ENCODE measurements at regions of chr9 and their contacts with region 1.

Region 1: GRCh38 chr9:71669256-71669975 is 98.9 kb downstream of the CEMIP2 start:
- DNase-seq: no peak
- ATAC-seq: peak; percentile 91
- H3K4me3 ChIP-seq: no peak overlapping the region
- H3K27ac ChIP-seq: no peak overlapping the region
- H3K4me1 ChIP-seq: peaks cover 38% of the 10 kb centered on the region
- H3K27me3 ChIP-seq: no peaks in the 10 kb centered on the region; a peak in 1 of 5 replicates
- CTCF ChIP-seq: no peak
- EP300 ChIP-seq: no peak
- POLR2A ChIP-seq: no peak
- RAD21 ChIP-seq: no peak

Region 2: GRCh38 chr9:72349240-72349639 is 679.8 kb after region 1 on chr9:
- CTCF ChIA-PET with region 1: no interaction called
- POLR2A ChIA-PET with region 1: no interaction called
- in situ Hi-C with region 1: no loop called
- intact Hi-C with region 1: loop called (anchors 5 kb)
- DNase-seq: no peak
- ATAC-seq: no peak
- H3K4me3 ChIP-seq: no peak overlapping the region
- H3K27ac ChIP-seq: no peak overlapping the region
- H3K4me1 ChIP-seq: peaks cover 16% of the 10 kb centered on the region
- H3K27me3 ChIP-seq: no peaks in the 10 kb centered on the region
- CTCF ChIP-seq: no peak
- EP300 ChIP-seq: no peak
- POLR2A ChIP-seq: no peak
- RAD21 ChIP-seq: no peak